ENCODE measurements at regions of chr20 and their contacts with region 1.

Region 1: DNA sequence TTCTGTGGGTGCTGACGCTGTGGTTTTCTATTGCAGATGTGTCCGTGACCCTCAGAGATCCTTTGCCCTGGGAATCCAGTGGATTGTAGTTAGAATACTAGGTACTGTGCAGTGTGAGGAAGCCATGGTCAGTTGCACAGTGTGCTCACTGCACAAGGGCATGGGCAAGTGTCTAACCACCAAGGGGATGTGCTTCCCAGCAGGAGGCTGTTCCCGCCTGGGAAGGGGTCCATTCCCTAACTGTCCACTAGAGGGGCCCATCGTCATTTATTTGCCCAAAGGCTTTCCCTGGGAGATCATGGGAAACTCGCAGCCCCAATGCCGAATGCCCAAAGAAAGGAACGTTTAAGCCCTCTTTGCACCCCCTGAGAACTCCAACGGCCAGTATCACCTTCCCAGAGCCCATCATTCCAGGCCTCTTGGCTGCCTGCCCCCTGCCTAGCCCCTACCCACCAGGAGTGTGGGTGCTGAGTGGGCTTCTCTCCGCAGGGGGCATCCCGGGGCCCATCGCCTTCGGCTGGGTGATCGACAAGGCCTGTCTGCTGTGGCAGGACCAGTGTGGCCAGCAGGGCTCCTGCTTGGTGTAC is 26.2 kb downstream of the SLCO4A1 start:
- DNase-seq: peak; percentile 70
- ATAC-seq: peak; percentile 74

Region 2: GRCh38 chr20:62523473-62524203 is 144.9 kb before region 1 on chr20:
- intact Hi-C with region 1: no loop called
- DNase-seq: no peak
- ATAC-seq: no peak

Region 3: GRCh38 chr20:62808211-62808865 is 139.8 kb after region 1 on chr20:
- intact Hi-C with region 1: loop called (anchors 10 kb)
- DNase-seq: peak; percentile 82
- ATAC-seq: peak; percentile 58

Measured in left ventricle myocardium superior (tissue), 1 donor.